Right ventricle myocardium superior (tissue), 1 donor: ENCODE measurements at regions of chr3 and their contacts with region 1.

Region 1: GRCh38 chr3:149717391-149718056 is 34.8 kb downstream of the COMMD2 start:
- DNase-seq: no peak
- ATAC-seq: peak; percentile 73

Region 2: DNA sequence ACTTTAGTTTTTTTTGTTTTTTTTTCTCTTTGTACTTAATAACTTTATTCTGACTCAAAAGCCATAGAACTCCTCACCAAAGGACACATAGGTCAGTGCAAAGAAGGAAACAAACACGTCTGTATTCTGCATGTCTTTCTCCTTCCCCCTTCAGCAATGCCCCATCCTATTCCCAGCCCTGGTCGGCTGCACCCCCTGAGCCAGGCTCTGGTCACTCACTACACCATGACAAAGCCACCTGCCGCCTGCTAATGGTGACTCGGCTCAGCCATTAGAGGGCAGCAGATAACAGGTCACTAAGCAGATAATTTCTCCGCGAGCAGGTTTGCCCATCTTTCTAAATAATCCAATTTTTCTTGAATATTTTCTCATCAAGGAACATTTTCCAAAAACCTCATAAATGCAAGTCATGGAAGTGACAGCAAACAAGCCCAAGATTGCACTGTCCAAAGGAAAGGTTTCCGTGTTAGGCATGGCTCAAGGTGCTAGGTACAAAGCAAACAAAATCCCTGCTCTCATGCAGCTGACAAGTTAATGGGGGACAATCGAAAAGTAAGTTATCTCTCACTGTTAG is 205.2 kb before region 1 on chr3:
- intact Hi-C with region 1: loop called (anchors 5 kb)
- DNase-seq: peak; percentile 59
- ATAC-seq: peak; percentile 88

Region 3: DNA sequence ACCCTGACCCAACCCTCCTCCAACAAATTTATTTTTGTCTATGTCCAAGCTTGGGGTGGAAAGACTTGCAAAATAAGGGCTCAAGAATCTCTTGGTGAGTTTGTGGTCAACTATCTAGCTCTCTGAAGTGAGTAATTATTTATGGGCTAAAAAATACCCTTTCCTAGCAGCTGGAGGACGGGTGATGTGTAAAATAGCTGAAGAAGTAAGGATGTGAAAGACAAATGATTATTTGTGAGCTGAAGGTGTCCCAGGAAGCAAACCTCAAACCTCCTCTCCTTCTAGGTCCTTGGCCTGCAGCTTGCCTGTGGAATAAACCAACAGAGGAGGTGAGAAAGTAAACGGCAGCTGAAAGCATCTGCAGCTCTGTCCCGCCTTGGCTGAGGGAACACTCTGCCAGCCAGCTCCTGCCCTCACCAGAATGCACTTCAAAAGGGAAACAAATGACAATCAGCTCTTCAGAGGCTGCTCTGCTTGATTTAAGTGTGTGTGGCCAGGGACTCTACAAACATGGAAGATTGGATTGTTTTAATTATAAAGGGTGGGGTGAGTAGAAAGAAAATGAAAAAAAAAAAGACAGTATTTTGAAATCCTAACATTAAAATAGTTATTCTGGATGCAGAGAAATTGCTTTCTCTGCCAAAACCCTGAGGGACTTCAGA is 182.7 kb before region 1 on chr3:
- intact Hi-C with region 1: loop called (anchors 5 kb)
- DNase-seq: peak; percentile 41
- ATAC-seq: peak; percentile 57

Region 4: GRCh38 chr3:149654188-149654601 is 63.3 kb before region 1 on chr3:
- intact Hi-C with region 1: no loop called
- DNase-seq: no peak
- ATAC-seq: no peak